ENCODE measurements at regions of chr10 and their contacts with region 1.

Region 1: GRCh38 chr10:119705434-119705831 is 20.4 kb upstream of the INPP5F start:
- DNase-seq: no peak
- ATAC-seq: peak; percentile 59
- H3K4me3 Mint-ChIP-seq: peak overlapping the region; percentile 22
- H3K27ac Mint-ChIP-seq: peak overlapping the region; percentile 86
- H3K4me1 Mint-ChIP-seq: peaks cover 29% of the 10 kb centered on the region
- H3K27me3 Mint-ChIP-seq: no peaks in the 10 kb centered on the region

Region 2: GRCh38 chr10:119725828-119726675 is 20.6 kb after region 1 on chr10 and contains the start of gene INPP5F:
- CTCF ChIA-PET with region 1: interaction called, 12 read pairs
- POLR2A ChIA-PET with region 1: interaction called, 20 read pairs
- DNase-seq: peak; percentile 99
- ATAC-seq: peak; percentile 94
- H3K4me3 Mint-ChIP-seq: peak within 1 kb of the TSS; percentile 87
- H3K27ac Mint-ChIP-seq: peak within 1 kb of the TSS; percentile 81
- H3K4me1 Mint-ChIP-seq: peaks cover 46% of the 10 kb centered on the region
- H3K27me3 Mint-ChIP-seq: no peaks in the 10 kb centered on the region
- total RNA-seq, gene INPP5F: 15.9 to 17.6 TPM

Measured in activated CD8-positive, alpha-beta T cell treated with anti-CD3 and anti-CD28 coated beads, Interleukin-2, amount 10 ng/mL, durations not matched to agents 7 days and 5 days (primary cell).